WTC11 (cell line): ENCODE measurements at regions of chr19 and their contacts with region 1.

Region 1: GRCh38 chr19:45960595-45961235 is 12.9 kb downstream of the NOVA2 start:
- DNase-seq: peak; percentile 82
- ATAC-seq: peak; percentile 97
- H3K4me3 Mint-ChIP-seq: peak overlapping the region; percentile 14
- H3K27ac Mint-ChIP-seq: 0 out of 2 replicates have a peak overlapping the region, but pooled peaks have one; percentile 6
- H3K4me1 Mint-ChIP-seq: peaks cover 13% of the 10 kb centered on the region
- H3K27me3 Mint-ChIP-seq: peaks cover 78% of the 10 kb centered on the region
- CTCF ChIP-seq: no peak

Region 2: GRCh38 chr19:45862564-45863334 is 98.0 kb before region 1 on chr19 and contains the start of gene SYMPK:
- CTCF ChIA-PET with region 1: interaction called, 20 read pairs
- POLR2A ChIA-PET with region 1: no interaction called
- DNase-seq: peak; percentile 99
- ATAC-seq: peak; percentile 93
- H3K4me3 Mint-ChIP-seq: peak within 1 kb of the TSS; percentile 89
- H3K27ac Mint-ChIP-seq: peak within 1 kb of the TSS; percentile 99
- H3K4me1 Mint-ChIP-seq: peaks cover 40% of the 10 kb centered on the region
- H3K27me3 Mint-ChIP-seq: no peaks in the 10 kb centered on the region
- CTCF ChIP-seq: no peak
- total RNA-seq, gene SYMPK: 105 to 111 TPM (median 106 TPM) in 3 replicates

Region 3: DNA sequence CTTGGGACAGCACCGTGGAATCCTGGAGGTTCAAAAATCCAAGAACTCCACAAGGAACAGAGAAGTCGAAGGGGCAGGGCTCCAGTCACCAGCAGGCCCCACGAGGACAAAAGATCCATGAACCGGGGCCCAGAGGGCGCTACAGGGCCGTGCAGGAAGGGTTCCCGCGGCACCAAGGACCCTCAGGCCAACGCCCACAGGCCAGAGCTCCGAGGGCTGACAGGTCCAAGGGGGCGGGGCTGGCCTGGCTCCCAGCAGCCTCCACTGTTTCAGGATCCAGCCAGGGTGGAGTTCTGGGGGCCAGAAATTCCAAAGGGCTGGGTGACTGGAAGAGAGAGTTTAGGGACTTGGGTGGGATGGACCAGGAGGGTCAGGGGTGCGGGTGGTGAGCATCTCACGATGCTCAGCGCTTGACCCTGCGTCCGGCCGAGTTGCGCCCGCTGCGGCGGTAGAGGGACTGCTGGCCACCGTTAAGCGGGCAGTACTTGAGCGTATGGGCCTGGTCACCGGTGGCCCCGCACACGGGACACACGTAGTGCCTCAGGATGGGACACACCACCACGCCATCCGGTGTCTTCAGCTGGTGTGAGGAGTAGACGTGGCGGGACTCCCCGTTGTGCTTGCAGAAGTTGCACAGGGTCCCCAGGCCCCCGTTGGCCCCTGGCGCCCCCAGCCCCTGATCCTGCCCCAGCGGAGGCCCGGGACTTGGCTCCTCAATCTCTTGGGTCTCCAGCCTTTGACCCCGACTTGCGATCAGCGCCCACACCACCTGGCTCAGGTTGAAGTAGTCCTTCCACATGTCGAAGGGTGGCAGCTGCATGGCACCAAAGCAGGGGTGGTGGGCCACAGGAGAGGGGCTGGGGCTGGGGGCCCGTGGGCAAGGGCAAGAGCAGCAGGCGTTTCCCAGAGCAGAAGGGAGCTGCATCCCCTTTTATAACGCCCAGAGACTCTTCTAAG is 46.6 kb before region 1 on chr19 and contains the start of gene NANOS2:
- CTCF ChIA-PET with region 1: interaction called, 19 read pairs
- POLR2A ChIA-PET with region 1: no interaction called
- DNase-seq: peak; percentile 94
- ATAC-seq: peak; percentile 98
- H3K4me3 Mint-ChIP-seq: no peak within 1 kb of the TSS
- H3K27ac Mint-ChIP-seq: no peak within 1 kb of the TSS
- H3K4me1 Mint-ChIP-seq: no peaks in the 10 kb centered on the region
- H3K27me3 Mint-ChIP-seq: peaks cover 7% of the 10 kb centered on the region
- CTCF ChIP-seq: no peak
- total RNA-seq, gene NANOS2: 0.13 to 0.18 TPM in 2 of 3 replicates, not detected in the other

Region 4: DNA sequence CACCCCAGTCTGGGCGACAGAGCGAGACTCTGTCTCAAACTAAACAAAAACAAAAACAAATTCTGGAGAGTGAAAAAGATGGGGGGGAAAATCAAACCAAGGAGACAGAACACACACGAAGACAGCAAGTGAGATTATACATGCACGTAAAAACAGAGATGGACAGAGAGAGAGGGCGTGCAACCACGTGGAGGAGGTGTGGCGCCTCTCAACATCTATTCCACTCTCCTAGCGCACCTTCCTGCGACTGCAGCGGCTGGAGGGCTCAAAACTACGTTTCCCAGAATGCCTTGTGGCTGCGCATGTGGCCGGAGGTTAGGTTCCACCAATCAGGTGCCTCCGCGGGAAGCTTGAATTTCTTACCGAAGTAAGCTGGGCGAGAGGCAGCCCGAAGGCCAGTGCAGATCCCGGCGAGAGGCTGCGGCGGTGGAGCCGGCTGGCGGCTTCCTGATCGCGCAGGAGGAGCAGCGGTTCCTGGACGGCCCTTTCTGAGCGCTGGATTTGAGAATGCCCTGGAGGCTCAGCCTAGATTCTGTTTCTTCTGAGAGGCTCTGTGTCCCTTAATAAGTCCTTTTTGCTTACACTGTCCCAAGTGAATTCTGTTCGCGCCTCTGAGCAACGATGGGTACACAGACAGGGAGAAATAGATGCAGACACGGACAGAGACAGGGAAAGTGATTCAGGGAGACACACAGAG is 33.0 kb before region 1 on chr19:
- CTCF ChIA-PET with region 1: interaction called, 17 read pairs
- POLR2A ChIA-PET with region 1: no interaction called
- DNase-seq: peak; percentile 95
- ATAC-seq: peak; percentile 99
- H3K4me3 Mint-ChIP-seq: peak overlapping the region; percentile 63
- H3K27ac Mint-ChIP-seq: no peak overlapping the region
- H3K4me1 Mint-ChIP-seq: peaks cover 8% of the 10 kb centered on the region
- H3K27me3 Mint-ChIP-seq: peaks cover 66% of the 10 kb centered on the region
- CTCF ChIP-seq: no peak

Region 5: DNA sequence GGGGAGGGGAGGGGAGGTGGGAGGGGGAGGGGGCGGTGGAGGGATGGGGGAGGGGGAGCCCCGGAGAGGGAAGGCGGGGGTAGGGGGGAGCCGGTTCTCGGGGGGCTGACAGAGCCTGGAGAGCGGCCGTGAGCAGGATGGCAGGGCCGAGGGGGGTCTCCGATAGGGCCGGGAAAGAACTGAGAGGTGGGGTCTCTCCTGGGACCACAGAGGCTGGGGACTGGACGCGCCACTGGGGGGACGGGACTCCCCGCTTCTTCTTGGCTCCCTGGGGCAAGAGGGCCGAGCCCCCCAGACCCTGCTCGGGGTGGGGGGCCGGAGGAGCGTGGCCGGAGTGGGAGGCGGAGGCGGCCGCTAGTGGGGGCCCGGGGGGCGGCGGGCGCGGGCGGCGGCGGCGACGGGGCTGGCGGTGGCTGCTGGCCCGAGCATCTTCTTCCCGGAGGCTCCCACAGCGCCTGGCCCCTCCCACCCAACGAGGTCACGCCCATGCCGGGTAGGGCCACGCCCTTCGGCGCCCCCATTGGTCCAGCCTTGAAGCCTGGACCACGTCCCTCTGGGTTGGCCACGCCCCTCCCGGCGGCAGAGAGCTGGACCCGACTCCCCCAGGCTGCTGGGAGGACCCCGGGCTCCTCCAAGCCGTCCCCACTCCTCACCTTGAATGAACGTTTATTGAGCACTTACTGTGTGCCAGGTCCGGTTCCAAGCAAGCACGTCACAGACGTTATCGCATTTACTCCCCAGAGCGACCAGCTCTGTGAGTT is 13.0 kb after region 1 on chr19 and contains the start of gene NOVA2:
- CTCF ChIA-PET with region 1: interaction called, 39 read pairs
- POLR2A ChIA-PET with region 1: interaction called, 9 read pairs
- DNase-seq: peak; percentile 99
- ATAC-seq: peak; percentile 99
- H3K4me3 Mint-ChIP-seq: peak within 1 kb of the TSS; percentile 61
- H3K27ac Mint-ChIP-seq: no peak within 1 kb of the TSS
- H3K4me1 Mint-ChIP-seq: peaks cover 16% of the 10 kb centered on the region
- H3K27me3 Mint-ChIP-seq: peaks cover 87% of the 10 kb centered on the region
- CTCF ChIP-seq: no peak
- total RNA-seq, gene NOVA2: 11.3 to 15.6 TPM (median 15.4 TPM) in 3 replicates

Region 6: GRCh38 chr19:46009530-46010510 is 49.1 kb after region 1 on chr19:
- CTCF ChIA-PET with region 1: interaction called, 15 read pairs
- POLR2A ChIA-PET with region 1: no interaction called
- DNase-seq: peak; percentile 89
- ATAC-seq: peak; percentile 90
- H3K4me3 Mint-ChIP-seq: no peak overlapping the region
- H3K27ac Mint-ChIP-seq: no peak overlapping the region
- H3K4me1 Mint-ChIP-seq: peaks cover 5% of the 10 kb centered on the region
- H3K27me3 Mint-ChIP-seq: peaks cover 14% of the 10 kb centered on the region
- CTCF ChIP-seq: peak; percentile 97

Region 7: DNA sequence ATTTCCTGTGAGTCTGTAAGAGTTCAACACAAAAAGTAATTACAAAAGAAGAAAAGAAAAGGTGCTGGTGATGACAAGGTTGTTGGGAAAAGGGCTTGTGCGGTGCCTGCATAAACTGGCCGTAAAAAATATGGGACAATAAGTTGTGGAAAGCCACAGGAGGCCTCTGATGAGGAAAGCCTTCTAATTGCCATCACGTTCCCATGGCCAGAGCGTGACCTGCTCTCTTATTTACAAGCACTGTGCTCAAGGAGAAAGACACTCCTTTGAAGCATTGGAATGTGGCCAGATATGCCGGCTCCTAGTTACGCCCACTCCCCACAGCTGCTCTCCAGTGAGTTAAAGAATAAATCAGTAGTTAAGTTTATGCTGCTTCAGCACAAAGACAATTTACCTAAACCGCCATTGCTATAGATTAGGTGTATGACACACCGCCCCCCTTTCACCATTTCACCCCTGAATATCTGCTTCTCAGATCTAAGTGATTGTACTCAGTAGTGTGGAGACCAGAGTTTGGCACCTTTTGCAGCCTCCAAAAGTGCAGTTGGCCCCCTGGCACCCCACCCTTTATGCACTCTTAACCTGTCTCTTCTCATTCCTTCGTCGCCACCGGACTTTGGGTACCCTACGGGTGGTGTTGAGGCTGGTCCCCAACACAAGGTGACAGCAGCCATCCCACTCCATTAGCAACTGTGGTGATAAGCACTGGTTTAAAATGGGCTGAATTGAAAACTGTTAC is 70.3 kb after region 1 on chr19:
- CTCF ChIA-PET with region 1: interaction called, 19 read pairs
- POLR2A ChIA-PET with region 1: no interaction called
- DNase-seq: no peak
- ATAC-seq: no peak
- H3K4me3 Mint-ChIP-seq: no peak overlapping the region
- H3K27ac Mint-ChIP-seq: no peak overlapping the region
- H3K4me1 Mint-ChIP-seq: no peaks in the 10 kb centered on the region
- H3K27me3 Mint-ChIP-seq: no peaks in the 10 kb centered on the region; the same call in 1 of the 2 replicates
- CTCF ChIP-seq: no peak